Left cardiac atrium (tissue), 4 donors: ENCODE measurements at regions of chr9 and their contacts with region 1.

Region 1: DNA sequence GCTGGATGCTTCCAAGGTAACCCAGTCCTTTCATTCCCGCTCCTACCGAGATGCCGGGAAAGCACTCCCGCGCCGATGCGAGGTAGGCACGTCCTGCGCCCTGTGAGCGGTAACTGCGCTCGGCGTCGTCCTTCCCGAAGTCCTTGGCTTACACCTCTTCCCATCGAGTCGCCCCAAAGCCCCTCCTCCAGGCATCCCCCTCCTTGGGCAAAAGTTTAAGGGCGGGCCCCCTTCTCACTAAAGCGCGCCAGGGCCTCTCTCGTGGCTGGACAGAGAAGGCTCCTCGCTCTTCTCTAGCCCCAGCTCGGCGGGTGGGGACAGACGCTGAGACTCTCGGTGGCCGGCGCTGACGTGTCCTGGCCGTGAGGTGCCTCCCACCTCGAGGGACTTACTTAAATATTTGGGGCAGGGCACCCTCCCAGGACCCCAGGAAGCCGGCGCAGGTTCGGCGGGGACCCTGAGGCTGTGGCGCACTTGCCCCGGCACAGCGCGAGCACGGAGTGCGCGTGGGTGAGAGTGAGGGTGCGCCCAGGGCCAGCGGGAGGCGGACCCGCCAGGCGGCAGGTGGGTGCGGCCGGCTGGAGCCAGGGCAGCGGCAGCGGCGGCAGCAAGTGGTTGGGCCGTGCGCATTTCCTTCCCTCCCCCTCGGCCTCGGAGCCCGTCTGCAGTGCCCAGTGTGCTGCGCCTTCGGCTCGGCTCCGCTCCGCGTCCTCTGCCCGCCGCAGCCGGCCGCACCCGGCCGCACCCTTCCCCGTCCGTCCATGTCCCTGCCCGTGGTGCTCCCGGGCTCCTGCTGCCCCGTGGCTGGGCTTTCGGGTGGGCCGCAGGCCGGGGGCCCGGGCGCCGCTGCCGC is at the start of gene ENTREP1:
- DNase-seq: peak; percentile 83
- ATAC-seq: peak; percentile 92 to 97
- total RNA-seq, gene ENTREP1: 12.0 to 16.4 TPM

Region 2: GRCh38 chr9:69223605-69224004 is 101.2 kb before region 1 on chr9:
- intact Hi-C with region 1: loop called in 1 of 2 experiments (anchors 10 kb)
- DNase-seq: no peak
- ATAC-seq: peak; percentile 75 to 78

Region 3: GRCh38 chr9:69237702-69238295 is 87.0 kb before region 1 on chr9:
- intact Hi-C with region 1: no loop called
- DNase-seq: no peak
- ATAC-seq: no peak

Region 4: GRCh38 chr9:69279084-69279729 is 45.6 kb before region 1 on chr9:
- intact Hi-C with region 1: loop called in 1 of 2 experiments (anchors 10 kb)
- DNase-seq: no peak
- ATAC-seq: no peak

Region 5: GRCh38 chr9:69364510-69365150 is 39.9 kb after region 1 on chr9:
- intact Hi-C with region 1: no loop called
- DNase-seq: no peak
- ATAC-seq: peak; percentile 33 to 44

Region 6: DNA sequence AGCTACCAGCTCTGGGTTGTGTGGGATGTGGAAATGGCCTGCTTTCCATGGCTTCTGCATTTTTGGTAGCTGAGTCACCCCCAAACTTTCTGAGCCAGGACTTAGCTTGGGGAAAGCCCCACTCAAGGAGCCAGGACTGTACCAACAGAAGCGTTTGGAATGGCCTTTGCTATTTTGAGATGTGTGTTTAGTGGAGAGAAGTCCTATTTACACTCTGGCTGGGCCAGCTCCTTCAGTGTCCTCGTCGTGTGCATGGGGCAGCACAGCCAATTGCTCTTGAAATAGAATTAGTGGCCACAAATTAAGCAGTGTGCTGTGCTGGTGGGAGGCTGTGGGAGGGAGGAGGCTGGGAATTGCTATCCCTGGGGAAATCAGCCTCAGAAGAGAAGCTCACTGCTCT is 51.9 kb after region 1 on chr9:
- intact Hi-C with region 1: loop called in 1 of 2 experiments (anchors 5 kb)
- DNase-seq: peak; percentile 53
- ATAC-seq: peak; percentile 86 to 89

Region 7: DNA sequence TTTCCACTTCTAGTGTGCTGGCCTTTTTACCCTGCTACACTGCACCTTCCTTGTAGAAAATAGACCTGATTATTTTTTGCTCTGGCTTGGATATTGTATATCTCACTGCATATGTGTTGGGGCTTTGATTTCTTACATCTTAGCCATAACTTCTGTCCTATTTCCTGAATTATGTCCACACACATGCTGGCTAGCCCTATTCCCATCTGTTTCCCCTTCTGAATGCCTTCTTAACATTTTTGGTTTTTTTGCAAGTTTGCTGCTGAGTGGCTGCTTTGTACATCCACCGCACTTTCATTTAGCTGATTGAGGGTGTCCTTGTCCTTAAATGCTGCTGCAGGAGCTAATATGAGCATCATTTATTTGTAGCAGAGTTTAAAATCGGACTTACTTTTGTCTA is 522.7 kb after region 1 on chr9:
- intact Hi-C with region 1: no loop called
- DNase-seq: no peak
- ATAC-seq: no peak